Gastrocnemius medialis (tissue), 4 donors: ENCODE measurements at regions of chr4 and their contacts with region 1.

Region 1: DNA sequence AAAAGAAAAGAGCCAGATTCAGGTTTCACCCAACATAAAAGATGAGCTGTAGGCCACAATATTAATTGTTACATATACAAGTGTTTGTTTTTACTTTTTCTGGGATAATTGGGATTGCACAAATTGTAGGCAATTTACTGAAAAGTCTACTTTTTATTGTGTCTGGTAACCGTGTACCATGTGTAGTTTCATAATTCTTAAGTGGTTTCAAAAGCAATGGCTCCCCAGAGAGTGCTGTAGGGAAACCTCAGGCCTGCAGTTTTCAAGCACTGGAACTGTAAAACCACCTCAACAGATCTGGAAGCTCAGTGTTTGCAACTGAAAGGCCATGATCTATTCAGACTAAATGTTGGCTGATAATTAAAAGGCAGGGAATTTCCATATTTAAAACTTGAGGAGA is 53.9 kb upstream of the MMAA start:
- DNase-seq: no peak
- ATAC-seq: no peak
- H3K4me3 ChIP-seq: no peak overlapping the region
- H3K27ac ChIP-seq: no peak overlapping the region
- H3K4me1 ChIP-seq: no peaks in the 10 kb centered on the region
- H3K27me3 ChIP-seq: no peaks in the 10 kb centered on the region
- CTCF ChIP-seq: no peak
- POLR2A ChIP-seq: no peak

Region 2: DNA sequence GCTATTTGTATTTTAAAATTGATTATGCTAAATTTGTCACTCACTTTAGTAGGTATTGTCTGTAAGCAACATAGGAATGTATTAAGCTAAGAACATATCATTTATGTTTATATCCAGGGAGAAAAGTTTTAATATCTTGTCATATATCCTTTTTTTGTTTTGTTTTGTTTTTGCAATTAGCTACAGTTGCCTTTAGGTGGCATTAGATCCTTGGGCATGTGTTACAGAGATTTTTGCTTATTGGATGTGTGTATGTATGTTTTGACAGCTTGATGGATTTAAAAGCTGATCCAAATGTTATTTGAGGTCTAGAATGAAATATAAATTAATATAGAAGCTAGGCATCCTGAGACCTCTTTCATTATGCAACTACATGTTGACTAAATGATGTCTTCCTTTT is 348.8 kb before region 1 on chr4:
- in situ Hi-C with region 1: loop called in 1 of 4 experiments (anchors 10 kb)
- intact Hi-C with region 1: no loop called
- DNase-seq: no peak
- ATAC-seq: no peak
- H3K4me3 ChIP-seq: no peak overlapping the region
- H3K27ac ChIP-seq: no peak overlapping the region
- H3K4me1 ChIP-seq: peaks cover 0 to 6% of the 10 kb centered on the region in 2 donors
- H3K27me3 ChIP-seq: no peaks in the 10 kb centered on the region
- CTCF ChIP-seq: peak in 3 of 5 experiments; percentile 29 to 43 (median 35)
- POLR2A ChIP-seq: no peak

Region 3: GRCh38 chr4:145609481-145610427 is 44.4 kb after region 1 on chr4:
- in situ Hi-C with region 1: no loop called
- intact Hi-C with region 1: loop called (anchors 5 kb)
- DNase-seq: peak in 1 of 2 donors; percentile 38
- ATAC-seq: peak in 1 of 2 donors; percentile 73
- H3K4me3 ChIP-seq: no peak overlapping the region
- H3K27ac ChIP-seq: peak overlapping the region in 1 of 4 donors; percentile 31
- H3K4me1 ChIP-seq: no peaks in the 10 kb centered on the region
- H3K27me3 ChIP-seq: no peaks in the 10 kb centered on the region
- CTCF ChIP-seq: peak; percentile 47 to 76 (median 62)
- POLR2A ChIP-seq: no peak